Activated B cell treated with CpG ODN at 0.5 μM for 24 hours (primary cell): ENCODE measurements at regions of chr7 and their contacts with region 1.

Region 1: DNA sequence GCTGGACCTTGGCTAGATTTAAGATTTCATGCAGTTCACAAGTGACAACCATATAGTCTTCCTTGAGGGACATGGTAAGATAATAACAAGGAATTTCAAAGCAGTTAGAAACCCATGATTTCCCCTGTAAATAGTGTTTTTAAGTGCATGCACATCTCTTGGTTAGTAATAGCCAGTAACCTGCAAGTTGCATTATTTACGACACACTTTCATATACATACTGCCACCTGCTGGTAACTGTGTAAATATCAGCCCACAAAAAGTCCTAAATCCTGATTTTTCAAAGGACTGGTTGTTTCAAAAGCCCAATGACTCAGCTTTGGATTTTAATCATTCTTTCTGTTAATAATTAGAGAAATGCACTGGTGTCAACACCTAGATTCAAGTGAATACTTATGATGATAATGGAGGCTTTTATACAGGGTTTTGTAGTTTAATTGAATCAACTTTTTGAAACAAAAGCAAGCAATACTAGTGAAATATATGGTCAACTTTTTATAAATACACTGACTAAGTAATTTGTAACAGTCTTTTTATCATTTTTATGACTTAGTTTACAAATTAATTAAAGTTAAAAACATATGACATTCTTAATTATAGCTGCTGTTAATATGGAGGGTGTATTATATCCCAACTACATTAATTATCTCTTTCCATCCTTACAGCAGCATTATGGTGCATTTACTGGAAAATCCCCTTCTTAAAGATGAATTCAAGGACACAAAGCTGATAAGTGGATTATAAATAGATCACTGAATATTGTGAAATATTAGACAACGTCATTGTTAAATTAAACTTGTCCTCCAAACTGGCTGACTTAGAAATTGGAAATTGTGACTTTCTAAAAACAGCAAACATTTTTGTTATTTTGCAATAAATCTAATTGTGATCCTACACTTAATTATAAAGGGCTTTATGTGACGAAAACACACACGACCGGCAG is 367.7 kb upstream of the SEMA3D start:
- DNase-seq: no peak
- ATAC-seq: peak; percentile 40
- H3K4me3 Mint-ChIP-seq: no peak overlapping the region
- H3K27ac Mint-ChIP-seq: no peak overlapping the region
- H3K4me1 Mint-ChIP-seq: no peaks in the 10 kb centered on the region
- H3K27me3 Mint-ChIP-seq: no peaks in the 10 kb centered on the region
- CTCF ChIP-seq: no peak

Region 2: DNA sequence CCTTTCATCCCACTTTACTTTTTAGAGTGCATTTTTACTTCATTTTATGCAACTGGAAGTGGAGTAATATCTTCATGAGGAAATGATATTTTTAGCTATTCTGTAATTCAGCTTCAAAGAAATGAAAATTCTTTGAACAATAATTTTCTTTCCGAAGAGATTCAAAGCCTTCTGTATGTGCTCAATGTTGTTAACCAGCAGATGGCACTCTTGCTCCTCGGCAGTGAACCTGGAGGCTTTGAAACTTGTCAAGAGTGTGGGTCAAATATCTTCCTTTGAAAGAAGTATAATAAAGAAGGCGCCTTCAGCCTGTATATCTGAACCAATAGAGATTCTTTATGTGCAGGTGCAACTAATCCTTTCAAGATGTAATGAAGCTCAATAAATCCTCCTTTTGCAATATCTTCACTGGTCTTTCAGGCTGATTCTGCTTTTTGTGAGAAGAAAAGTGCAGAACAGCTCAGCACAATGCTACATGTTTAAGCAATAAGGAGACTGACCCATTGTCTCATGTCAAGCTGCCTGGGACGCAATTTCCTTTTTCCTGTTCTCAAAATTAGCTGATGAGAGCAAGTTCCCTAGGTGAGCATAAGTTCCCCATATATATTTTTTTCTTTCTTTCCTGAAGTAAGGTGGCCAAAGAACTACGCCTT is 1618.3 kb before region 1 on chr7:
- CTCF ChIA-PET with region 1: interaction called, 3 read pairs
- POLR2A ChIA-PET with region 1: no interaction called
- intact Hi-C with region 1: loop called (anchors 2 kb)
- DNase-seq: no peak
- ATAC-seq: peak; percentile 42
- H3K4me3 Mint-ChIP-seq: no peak overlapping the region
- H3K27ac Mint-ChIP-seq: no peak overlapping the region
- H3K4me1 Mint-ChIP-seq: no peaks in the 10 kb centered on the region
- H3K27me3 Mint-ChIP-seq: no peaks in the 10 kb centered on the region
- CTCF ChIP-seq: no peak

Region 3: DNA sequence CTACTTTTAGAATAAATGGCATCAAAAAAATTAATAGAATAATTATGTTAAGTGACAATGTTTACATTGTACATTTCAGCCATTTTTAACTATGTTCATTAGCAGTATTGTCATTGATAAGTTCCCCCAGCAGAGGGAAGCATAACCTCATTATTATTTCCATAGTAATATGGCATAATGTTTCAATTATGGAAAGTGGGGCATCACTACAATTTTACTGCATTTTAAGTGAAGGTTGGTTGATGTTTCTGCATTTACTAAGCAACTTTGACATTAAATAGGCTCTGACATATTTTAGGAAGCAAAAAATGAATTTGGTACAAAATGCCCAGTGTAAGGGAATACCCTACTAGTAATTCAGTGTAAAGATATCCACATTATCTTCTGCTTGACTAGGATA is 1578.2 kb before region 1 on chr7:
- CTCF ChIA-PET with region 1: no interaction called
- POLR2A ChIA-PET with region 1: no interaction called
- intact Hi-C with region 1: loop called (anchors 2 kb)
- DNase-seq: no peak
- ATAC-seq: no peak
- H3K4me3 Mint-ChIP-seq: no peak overlapping the region
- H3K27ac Mint-ChIP-seq: no peak overlapping the region
- H3K4me1 Mint-ChIP-seq: no peaks in the 10 kb centered on the region
- H3K27me3 Mint-ChIP-seq: no peaks in the 10 kb centered on the region
- CTCF ChIP-seq: no peak

Region 4: DNA sequence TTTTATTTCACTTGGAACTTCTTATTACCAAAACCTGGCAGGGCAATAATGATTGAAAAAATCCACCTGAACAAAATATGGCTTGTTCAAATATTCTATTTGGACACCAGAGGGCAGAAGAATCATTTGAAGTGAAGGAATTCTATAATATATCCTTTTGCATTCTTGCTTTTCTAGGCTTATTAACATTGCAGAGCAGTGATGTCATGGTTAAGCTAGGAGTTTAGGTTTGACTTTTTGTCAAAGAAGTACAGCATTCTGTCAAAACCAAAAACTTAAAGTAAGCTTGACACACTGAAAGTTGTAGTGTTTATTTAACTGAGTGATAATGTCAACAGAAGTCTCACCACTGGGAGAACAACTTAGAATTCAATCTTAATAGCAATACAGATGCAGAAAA is 523.6 kb before region 1 on chr7:
- CTCF ChIA-PET with region 1: interaction called, 13 read pairs
- POLR2A ChIA-PET with region 1: no interaction called
- intact Hi-C with region 1: loop called (anchors 1 kb)
- DNase-seq: no peak
- ATAC-seq: no peak
- H3K4me3 Mint-ChIP-seq: no peak overlapping the region
- H3K27ac Mint-ChIP-seq: no peak overlapping the region
- H3K4me1 Mint-ChIP-seq: no peaks in the 10 kb centered on the region
- H3K27me3 Mint-ChIP-seq: no peaks in the 10 kb centered on the region
- CTCF ChIP-seq: no peak

Region 5: GRCh38 chr7:85041605-85042216 is 512.8 kb before region 1 on chr7:
- CTCF ChIA-PET with region 1: interaction called, 75 read pairs
- POLR2A ChIA-PET with region 1: no interaction called
- intact Hi-C with region 1: loop called (anchors 1 kb)
- DNase-seq: no peak
- ATAC-seq: peak; percentile 21
- H3K4me3 Mint-ChIP-seq: no peak overlapping the region
- H3K27ac Mint-ChIP-seq: no peak overlapping the region
- H3K4me1 Mint-ChIP-seq: no peaks in the 10 kb centered on the region
- H3K27me3 Mint-ChIP-seq: no peaks in the 10 kb centered on the region
- CTCF ChIP-seq: no peak

Region 6: GRCh38 chr7:85186521-85187241 is 367.8 kb before region 1 on chr7 and contains the start of gene SEMA3D:
- CTCF ChIA-PET with region 1: interaction called, 7 read pairs
- POLR2A ChIA-PET with region 1: no interaction called
- intact Hi-C with region 1: loop called (anchors 1 kb)
- DNase-seq: peak; percentile 61
- ATAC-seq: peak; percentile 91
- H3K4me3 Mint-ChIP-seq: peak within 1 kb of the TSS; percentile 83
- H3K27ac Mint-ChIP-seq: no peak within 1 kb of the TSS
- H3K4me1 Mint-ChIP-seq: peaks cover 21% of the 10 kb centered on the region
- H3K27me3 Mint-ChIP-seq: peaks cover 22% of the 10 kb centered on the region
- CTCF ChIP-seq: no peak
- total RNA-seq, gene SEMA3D: not detected in 2 replicates